GM13976 (cell line): ENCODE measurements at regions of chr3 and their contacts with region 1.

Region 1: GRCh38 chr3:64030741-64031140 is 7.4 kb upstream of the PSMD6 start:
- DNase-seq: peak; percentile 74
- CTCF ChIP-seq: peak; percentile 84

Region 2: GRCh38 chr3:63051920-63052319 is 978.8 kb before region 1 on chr3:
- in situ Hi-C with region 1: no loop called
- DNase-seq: no peak
- CTCF ChIP-seq: no peak

Region 3: GRCh38 chr3:63824309-63824708 is 206.4 kb before region 1 on chr3:
- in situ Hi-C with region 1: no loop called
- DNase-seq: no peak
- CTCF ChIP-seq: no peak

Region 4: DNA sequence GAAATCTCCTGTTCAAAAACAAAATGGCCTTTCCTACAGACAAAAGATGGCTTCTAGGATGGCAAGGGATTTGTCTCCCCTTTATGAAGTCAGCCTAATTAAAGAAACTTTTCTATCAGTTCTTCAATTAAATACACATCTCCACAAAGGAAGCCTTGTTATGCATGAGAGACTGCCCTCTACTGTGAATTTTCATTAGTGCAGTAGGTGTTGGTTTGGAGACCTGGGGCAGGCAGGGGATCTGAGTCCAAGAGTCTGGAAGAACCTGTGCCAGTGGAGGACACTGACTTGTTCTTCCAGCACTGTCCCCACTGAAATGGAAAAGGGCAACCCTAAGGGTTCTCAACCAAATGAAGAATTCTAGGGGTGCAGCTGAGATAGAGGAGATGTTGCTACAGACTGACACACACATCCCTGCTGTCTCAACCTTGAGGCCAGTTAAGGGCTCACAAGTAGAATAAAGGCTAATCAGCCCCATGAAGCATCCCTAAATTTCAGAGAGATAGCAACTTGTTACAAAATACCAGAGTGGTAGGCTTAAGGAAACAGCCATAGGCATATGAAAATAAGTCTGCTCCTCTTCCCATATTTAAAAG is 368.6 kb after region 1 on chr3:
- in situ Hi-C with region 1: loop called (anchors 5 kb)
- DNase-seq: peak; percentile 41
- CTCF ChIP-seq: peak; percentile 20

Region 5: GRCh38 chr3:64484289-64484992 is 453.7 kb after region 1 on chr3:
- in situ Hi-C with region 1: loop called (anchors 10 kb)
- DNase-seq: peak; percentile 67
- CTCF ChIP-seq: peak; percentile 79